HEK293T (cell line): ENCODE measurements at regions of chr3 and their contacts with region 1.

Region 1: DNA sequence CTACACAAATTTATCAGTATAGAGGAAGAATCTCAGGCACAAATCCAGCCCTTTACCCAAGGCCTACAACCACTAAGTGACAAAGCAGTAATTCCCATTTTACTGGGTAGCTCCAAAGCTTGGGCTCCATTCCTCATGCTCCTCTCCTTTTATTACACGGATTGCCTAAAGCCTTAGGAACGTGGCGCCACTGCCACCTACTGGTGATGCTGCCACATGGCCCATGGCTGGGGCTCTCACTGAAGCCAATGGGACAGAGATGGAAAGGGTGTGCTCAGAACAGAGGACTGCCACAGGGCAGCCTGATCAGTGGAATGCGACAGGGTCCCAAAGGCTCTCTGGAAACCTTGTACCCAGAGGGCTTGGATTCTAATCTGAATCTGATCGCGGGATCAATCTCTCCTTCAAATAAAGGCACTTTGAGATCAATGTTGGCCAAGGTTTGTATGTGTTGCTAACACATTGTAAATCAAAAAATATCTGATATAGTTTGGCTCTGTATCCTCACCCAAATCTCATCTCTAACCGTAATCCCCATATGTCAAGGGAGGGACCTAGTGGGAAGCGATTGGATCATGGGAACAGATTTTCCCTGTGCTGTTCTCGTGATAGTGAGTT is 33.5 kb upstream of the LYZL4 start:
- DNase-seq: peak; percentile 85

Region 2: DNA sequence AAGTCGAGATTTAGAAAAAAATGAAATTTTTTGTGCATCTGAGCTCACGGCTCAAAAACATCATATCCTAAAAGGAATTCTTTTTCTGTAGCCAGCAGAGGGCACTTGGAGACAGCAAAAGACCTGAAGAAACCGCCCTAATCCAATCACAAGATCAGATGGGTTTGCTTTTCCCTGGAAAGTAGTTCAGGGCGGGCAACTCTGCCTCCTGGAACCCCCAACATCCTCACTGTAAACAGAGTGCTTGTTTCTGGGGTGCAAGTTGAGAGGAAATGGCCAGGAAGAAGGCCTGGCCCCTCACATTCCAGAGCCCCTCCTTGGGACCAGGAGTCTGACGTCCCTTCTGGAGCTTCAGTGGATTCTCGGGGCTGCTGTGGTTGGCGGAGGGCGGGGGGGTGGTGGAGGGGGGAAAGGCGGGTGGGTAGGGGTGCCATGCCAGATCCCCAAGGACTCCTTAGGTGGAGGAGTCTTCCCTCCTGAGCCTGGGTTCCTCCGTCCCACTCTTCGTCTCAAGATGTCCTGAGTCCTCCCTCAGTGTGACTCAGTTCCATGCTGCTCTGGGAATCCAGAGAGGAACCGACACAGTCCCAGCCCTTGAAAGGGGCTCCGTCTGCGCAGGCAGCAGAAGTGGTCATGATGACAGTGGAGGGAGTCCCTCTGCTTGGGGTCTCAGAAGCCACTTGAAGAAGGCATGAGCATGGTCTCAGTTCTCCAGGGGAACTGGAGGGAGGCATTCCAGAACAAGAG is 213.8 kb before region 1 on chr3:
- CTCF ChIA-PET with region 1: interaction called, 18 read pairs
- POLR2A ChIA-PET with region 1: no interaction called
- DNase-seq: peak; percentile 64

Region 3: DNA sequence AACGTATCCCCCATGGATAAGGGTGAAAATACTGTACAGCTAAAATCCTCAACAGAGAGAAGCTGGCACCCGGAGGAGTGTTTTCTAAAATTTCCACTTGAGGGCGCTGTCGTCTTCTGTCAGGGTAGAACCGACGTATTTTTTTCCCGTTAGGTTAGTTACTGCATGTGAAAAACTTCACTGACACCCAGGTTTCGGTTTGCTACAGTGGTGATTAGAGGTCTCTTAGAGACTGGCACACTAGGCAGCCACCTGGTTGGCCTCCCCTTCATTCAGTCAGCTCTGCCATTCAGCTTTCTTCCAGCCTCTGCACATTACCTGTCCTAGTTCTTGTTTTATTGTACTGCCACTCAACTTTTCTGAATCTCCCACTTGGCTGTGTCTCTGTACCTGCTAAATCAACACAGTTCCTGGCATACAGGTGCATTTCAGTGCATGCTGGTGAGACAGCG is 196.3 kb before region 1 on chr3:
- CTCF ChIA-PET with region 1: interaction called, 27 read pairs
- POLR2A ChIA-PET with region 1: no interaction called
- DNase-seq: peak; percentile 63